Activated naive CD4-positive, alpha-beta T cell treated with anti-CD3 and anti-CD28 coated beads for 36 hours (primary cell): ENCODE measurements at regions of chr21 and their contacts with region 1.

Region 1: DNA sequence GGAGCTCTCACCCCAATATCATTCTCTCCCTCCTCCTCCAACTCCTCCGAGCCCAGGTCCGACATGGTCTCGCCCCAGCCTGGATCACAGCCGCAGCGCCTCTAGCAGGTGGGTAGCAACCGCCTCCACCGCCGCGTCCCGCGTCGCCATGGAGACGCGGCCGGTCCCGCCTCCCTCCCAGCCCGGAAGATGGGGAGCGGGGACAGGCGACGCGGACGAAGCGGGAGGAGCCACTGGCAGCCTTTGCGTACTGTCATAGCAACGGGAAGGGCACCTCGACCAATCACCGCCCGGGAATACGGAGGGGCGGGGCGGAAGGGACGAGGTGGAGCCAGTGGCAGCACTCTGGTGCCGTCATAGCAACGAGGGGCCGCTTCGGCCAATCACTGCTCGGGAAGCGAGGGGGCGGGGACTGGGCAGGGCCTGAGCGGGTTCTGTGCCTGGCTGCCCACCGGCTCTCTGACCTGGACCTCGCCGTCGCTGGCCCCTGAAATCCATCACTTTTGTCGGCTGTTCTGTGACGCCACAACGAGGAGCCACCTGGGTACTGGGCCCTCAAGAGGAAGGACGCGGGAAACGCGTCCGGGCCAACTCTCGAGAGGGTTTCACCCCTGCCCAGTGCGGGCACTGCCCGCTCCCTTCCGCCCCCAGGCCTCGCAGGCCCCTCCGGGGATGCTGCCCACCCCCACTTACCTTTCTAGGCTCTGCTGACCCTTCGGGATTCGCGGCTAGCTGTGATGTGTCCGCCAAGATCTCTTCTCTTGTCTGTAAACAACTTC is at the start of gene RSPH1:
- DNase-seq: peak; percentile 100
- H3K4me3 Mint-ChIP-seq: peak within 1 kb of the TSS; percentile 89
- H3K27ac Mint-ChIP-seq: peak within 1 kb of the TSS; percentile 84
- H3K4me1 Mint-ChIP-seq: peaks cover 24% of the 10 kb centered on the region
- H3K27me3 Mint-ChIP-seq: no peaks in the 10 kb centered on the region
- total RNA-seq, gene RSPH1: 0.22 TPM in 1 of 2 experiments, not detected in the other

Region 2: DNA sequence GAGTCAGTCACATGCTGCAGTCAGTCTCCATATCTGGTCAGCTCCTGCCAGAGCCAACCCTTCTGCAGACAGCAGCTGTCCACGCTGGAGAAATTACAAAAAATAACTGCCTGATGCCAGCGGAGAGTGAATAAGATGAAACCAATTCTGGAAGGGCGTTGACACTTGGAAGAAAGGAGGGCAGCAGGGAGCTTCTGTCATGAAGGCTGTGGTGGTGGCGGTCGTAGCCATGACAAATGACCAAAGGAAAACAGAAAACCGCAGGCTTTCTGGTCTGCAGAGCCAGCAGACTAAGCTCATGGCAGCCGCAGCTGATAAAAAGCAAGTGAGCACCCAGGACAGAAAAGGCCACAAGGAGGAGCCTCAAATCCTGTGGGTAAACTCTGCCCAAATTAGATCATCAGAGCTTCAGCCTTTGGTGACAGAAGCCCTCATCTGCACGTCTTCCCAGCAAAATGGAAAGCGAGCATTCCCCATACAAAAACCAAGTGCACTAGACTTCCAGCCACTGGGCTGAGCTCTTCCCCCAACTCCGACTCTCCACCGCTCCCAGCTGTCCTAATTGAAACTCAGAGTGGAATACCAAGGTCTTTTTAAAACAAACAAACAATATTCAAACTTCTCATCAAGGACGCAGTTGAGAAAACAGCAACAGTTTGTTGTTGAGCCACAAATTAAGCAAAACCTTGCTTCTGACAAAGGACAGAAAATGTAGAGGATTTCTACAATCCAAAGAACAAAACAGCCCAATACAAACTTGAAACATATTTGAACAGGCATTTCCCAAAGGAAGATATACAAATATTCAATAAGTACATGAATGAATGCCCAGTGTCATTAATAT is 28.9 kb before region 1 on chr21:
- CTCF ChIA-PET with region 1: interaction called, 4 read pairs
- intact Hi-C with region 1: loop called (anchors 2 kb)
- DNase-seq: peak; percentile 35
- H3K4me3 Mint-ChIP-seq: no peak overlapping the region
- H3K27ac Mint-ChIP-seq: no peak overlapping the region
- H3K4me1 Mint-ChIP-seq: peaks cover 30% of the 10 kb centered on the region
- H3K27me3 Mint-ChIP-seq: no peaks in the 10 kb centered on the region

Region 3: GRCh38 chr21:42513985-42514882 is 17.9 kb after region 1 on chr21:
- CTCF ChIA-PET with region 1: interaction called, 3 read pairs
- intact Hi-C with region 1: loop called (anchors 1 kb)
- DNase-seq: peak; percentile 72
- H3K4me3 Mint-ChIP-seq: peak overlapping the region; percentile 87
- H3K27ac Mint-ChIP-seq: peak overlapping the region; percentile 84
- H3K4me1 Mint-ChIP-seq: peaks cover 31% of the 10 kb centered on the region
- H3K27me3 Mint-ChIP-seq: no peaks in the 10 kb centered on the region

Region 4: GRCh38 chr21:42537106-42537742 is 40.9 kb after region 1 on chr21:
- CTCF ChIA-PET with region 1: no interaction called
- intact Hi-C with region 1: no loop called
- DNase-seq: peak; percentile 54
- H3K4me3 Mint-ChIP-seq: no peak overlapping the region
- H3K27ac Mint-ChIP-seq: no peak overlapping the region
- H3K4me1 Mint-ChIP-seq: peaks cover 16% of the 10 kb centered on the region
- H3K27me3 Mint-ChIP-seq: no peaks in the 10 kb centered on the region